PC-9 (cell line): ENCODE measurements at regions of chr7 and their contacts with region 1.

Region 1: DNA sequence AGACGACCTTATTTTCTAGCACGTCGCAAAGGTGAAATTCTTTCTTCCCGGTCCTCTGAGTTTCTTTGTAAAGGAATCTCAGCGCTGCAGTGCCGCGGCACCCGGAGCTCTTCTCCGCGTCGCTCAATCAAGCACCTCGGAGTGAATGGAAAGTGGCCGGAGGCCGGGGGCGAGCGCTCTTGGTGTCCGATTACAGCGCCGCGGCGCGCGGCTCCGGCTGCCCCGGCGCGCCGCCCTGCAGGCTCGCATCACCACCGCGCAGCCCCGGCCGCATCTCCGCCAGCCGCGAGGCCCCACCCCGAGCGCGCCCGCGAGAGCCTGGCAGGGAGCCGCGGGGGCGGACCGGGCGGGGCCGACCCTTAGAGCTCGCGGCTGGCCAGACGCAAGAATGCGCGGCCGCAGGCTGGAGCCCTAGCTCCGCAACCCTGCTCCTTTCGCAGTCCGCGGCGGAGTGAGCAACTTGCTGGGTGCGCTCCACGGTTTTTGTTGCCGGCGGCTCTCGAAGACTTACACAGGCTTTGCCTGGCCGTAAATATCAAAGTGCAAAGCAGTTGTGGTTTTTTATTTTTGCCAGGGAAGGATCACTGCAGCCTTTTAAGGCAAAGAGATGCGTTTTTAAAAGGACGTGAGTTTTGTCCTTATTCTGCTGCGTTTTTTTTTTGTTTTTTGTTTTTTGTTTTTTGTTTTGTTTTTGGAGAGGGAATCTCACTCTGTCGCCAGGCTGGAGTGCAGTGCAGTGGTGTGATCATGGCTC is at the start of gene SEMA3C:
- DNase-seq: peak; percentile 89 to 98
- H3K4me3 ChIP-seq: peak within 1 kb of the TSS; percentile 86
- H3K27ac ChIP-seq: peak within 1 kb of the TSS; percentile 85
- H3K4me1 ChIP-seq: peaks cover 55% of the 10 kb centered on the region
- H3K27me3 ChIP-seq: no peaks in the 10 kb centered on the region
- CTCF ChIP-seq: no peak
- total RNA-seq, gene SEMA3C: 19.9 and 20.9 TPM in 2 replicates

Region 2: DNA sequence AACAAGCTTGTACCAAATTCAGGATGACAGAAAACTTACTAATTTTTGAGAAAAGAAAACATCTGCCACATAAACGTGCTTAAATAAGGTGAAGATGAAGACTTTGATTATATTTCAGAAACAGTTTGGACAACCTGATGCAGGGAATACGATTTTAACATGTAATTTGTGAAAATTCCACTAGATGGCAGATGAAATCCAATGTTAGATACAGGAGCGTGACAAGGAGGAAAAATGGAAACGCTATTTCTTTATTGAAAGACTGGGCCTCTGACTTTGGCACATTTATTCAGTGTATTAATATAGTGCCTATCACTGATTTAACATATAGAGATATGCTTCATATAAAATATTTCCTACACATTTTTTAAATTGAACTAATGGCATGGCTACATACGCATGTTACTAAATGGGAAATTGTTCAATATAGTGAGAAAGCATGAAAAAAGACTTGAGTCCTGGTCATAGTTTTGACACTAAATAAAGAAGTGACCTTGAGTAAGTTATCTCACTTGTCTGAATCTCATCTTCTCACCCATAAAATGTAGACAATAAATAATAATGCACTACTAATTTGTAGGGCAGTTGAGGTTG is 219.9 kb before region 1 on chr7:
- CTCF ChIA-PET with region 1: no interaction called
- POLR2A ChIA-PET with region 1: interaction called, 6 read pairs
- intact Hi-C with region 1: loop called (anchors 1 kb)
- DNase-seq: peak in 1 of 2 experiments; percentile 62
- H3K4me3 ChIP-seq: no peak overlapping the region
- H3K27ac ChIP-seq: no peak overlapping the region
- H3K4me1 ChIP-seq: no peaks in the 10 kb centered on the region
- H3K27me3 ChIP-seq: no peaks in the 10 kb centered on the region
- CTCF ChIP-seq: peak; percentile 93

Region 3: DNA sequence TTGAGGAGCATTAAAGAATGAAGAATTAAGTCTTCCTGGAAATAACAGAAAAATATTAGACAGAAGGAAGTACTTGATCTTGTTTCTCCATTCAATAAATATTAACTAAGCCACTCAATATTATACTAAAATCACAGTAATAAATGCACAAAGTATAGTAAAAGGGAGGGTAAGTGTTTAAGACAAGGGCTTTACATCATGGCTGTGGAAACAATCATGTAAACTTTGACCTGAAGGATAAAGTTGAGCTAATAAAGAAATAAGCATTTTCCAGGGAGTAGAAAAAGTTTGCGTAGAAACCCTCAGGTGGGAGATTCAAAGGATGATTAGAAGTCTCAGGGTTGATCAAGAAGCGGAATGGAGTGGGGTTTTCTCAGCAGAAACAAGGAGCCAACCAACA is 78.4 kb before region 1 on chr7:
- CTCF ChIA-PET with region 1: interaction called, 12 read pairs
- POLR2A ChIA-PET with region 1: no interaction called
- intact Hi-C with region 1: no loop called
- DNase-seq: no peak
- H3K4me3 ChIP-seq: no peak overlapping the region
- H3K27ac ChIP-seq: no peak overlapping the region
- H3K4me1 ChIP-seq: no peaks in the 10 kb centered on the region
- H3K27me3 ChIP-seq: no peaks in the 10 kb centered on the region
- CTCF ChIP-seq: no peak

Region 4: GRCh38 chr7:80890426-80891258 is 28.4 kb before region 1 on chr7:
- CTCF ChIA-PET with region 1: no interaction called
- POLR2A ChIA-PET with region 1: no interaction called
- intact Hi-C with region 1: no loop called
- DNase-seq: no peak
- H3K4me3 ChIP-seq: no peak overlapping the region
- H3K27ac ChIP-seq: no peak overlapping the region
- H3K4me1 ChIP-seq: no peaks in the 10 kb centered on the region
- H3K27me3 ChIP-seq: no peaks in the 10 kb centered on the region
- CTCF ChIP-seq: no peak

Region 5: DNA sequence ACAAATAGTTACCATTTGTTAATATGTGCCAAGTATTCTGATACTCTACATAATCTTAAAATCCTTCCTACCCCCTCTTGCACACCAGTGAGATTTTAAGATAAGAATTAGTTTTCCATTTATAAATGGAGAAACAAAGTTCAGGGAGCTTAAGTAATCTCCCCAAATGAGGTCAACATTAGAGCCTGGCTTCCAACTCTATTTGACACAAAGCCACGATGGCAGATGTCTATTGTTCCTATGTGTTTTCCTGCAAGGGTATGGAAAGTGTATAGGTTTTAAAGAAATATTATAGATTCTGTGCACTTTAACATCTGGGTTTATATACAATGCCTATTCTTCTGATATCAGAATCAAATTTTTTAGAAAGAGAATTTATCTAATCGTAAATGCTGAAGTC is 143.7 kb after region 1 on chr7:
- CTCF ChIA-PET with region 1: no interaction called
- POLR2A ChIA-PET with region 1: no interaction called
- intact Hi-C with region 1: no loop called
- DNase-seq: no peak
- H3K4me3 ChIP-seq: no peak overlapping the region
- H3K27ac ChIP-seq: no peak overlapping the region
- H3K4me1 ChIP-seq: no peaks in the 10 kb centered on the region
- H3K27me3 ChIP-seq: no peaks in the 10 kb centered on the region
- CTCF ChIP-seq: no peak

Region 6: GRCh38 chr7:81075150-81075549 is 156.1 kb after region 1 on chr7:
- CTCF ChIA-PET with region 1: no interaction called
- POLR2A ChIA-PET with region 1: no interaction called
- intact Hi-C with region 1: loop called (anchors 1 kb)
- DNase-seq: peak in 1 of 2 experiments; percentile 39
- H3K4me3 ChIP-seq: no peak overlapping the region
- H3K27ac ChIP-seq: peak overlapping the region; percentile 87; the same call in 1 of the 2 replicates
- H3K4me1 ChIP-seq: peaks cover 19% of the 10 kb centered on the region
- H3K27me3 ChIP-seq: no peaks in the 10 kb centered on the region
- CTCF ChIP-seq: no peak

Region 7: DNA sequence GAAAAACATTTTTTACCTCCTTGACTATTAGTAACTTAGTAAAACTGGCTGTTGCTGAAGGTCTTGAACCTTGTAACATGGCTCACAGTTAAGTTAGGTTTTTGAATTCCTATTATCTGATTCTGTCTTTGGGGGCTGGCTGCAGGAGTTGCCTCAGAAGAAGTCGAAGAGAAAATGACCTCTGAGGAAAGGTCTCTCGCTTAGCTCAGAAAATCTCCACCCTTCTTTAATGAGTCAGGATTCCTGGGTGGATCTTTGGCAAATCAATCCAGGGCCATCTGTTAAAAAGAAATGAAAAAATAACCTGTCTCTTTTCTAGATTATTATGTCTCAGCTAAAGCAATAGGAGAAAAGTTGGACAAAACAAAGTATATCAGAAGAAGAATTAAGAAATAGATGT is 267.6 kb after region 1 on chr7:
- CTCF ChIA-PET with region 1: interaction called, 10 read pairs
- POLR2A ChIA-PET with region 1: no interaction called
- intact Hi-C with region 1: no loop called
- DNase-seq: no peak
- H3K4me3 ChIP-seq: no peak overlapping the region
- H3K27ac ChIP-seq: no peak overlapping the region
- H3K4me1 ChIP-seq: peaks cover 5% of the 10 kb centered on the region; the same call in 1 of the 2 replicates
- H3K27me3 ChIP-seq: no peaks in the 10 kb centered on the region
- CTCF ChIP-seq: no peak